Caco-2 (cell line): ENCODE measurements at regions of chr2 and their contacts with region 1.

Region 1: DNA sequence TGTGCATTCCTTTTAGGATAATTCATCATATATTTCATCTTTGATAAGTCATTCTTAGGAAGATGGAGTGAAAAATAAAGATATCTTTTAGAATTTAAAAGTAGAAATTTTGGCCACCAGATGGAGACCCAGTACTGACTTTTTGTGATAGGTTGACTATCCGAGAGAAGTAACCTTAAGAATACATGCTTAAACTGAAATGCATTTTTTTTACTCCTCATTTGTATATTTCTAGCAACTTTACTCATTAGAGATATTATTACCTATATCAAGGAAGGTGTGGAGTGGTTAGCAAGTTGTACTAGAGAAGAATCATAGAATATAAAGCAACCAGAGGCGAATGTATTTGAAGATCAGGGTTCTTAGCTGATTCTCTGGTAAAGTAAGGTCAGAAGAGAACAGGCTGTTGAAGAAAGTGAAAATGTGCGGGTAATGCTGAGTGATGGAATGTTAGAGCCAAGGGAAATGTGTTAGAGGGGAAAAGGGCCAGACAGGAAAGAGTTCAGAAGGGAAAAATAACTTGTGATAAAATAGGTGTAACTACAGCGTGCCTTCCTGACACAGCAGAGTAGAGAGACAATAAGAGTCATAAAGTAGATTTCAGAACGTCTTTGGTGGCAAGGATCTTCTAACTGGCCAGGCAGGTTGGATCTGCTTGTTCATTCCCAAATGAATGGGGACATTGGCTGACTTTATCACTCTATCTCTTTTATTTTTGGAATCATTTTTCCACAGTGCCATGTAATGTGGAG is 52.3 kb downstream of the TDRD15 start:
- DNase-seq: peak in 1 of 2 experiments; percentile 25
- H3K4me3 ChIP-seq: no peak overlapping the region
- H3K4me3 Mint-ChIP-seq: peak overlapping the region; percentile 6
- H3K27ac Mint-ChIP-seq: no peak overlapping the region
- H3K4me1 ChIP-seq: peaks cover 8% of the 10 kb centered on the region
- H3K4me1 Mint-ChIP-seq: peaks cover 15% of the 10 kb centered on the region
- H3K27me3 ChIP-seq: no peaks in the 10 kb centered on the region
- H3K27me3 Mint-ChIP-seq: no peaks in the 10 kb centered on the region
- CTCF ChIP-seq: peak; percentile 12 to 66

Region 2: DNA sequence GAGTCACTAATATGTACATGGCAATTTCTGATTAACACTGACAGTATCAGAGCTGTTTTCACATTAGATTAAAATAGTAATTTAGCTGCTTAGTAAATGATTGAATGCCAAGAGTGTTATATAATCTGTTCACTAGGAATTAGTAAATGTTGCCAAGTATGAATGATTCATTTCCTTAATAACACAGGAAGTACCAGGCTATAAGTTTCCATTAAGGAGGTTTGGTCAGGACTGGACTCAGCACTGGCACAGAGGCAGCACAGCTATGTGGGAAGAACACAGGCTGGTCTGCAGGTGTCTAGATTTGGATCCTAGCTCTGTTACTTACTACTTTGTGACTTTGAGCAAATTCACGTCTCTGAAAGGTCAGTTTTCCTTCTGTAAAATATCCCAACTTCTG is 44.9 kb after region 1 on chr2:
- CTCF ChIA-PET with region 1: interaction called, 4 read pairs
- POLR2A ChIA-PET with region 1: no interaction called
- intact Hi-C with region 1: loop called (anchors 10 kb)
- DNase-seq: no peak
- H3K4me3 ChIP-seq: no peak overlapping the region
- H3K4me3 Mint-ChIP-seq: no peak overlapping the region
- H3K27ac Mint-ChIP-seq: no peak overlapping the region
- H3K4me1 ChIP-seq: peaks cover 10% of the 10 kb centered on the region
- H3K4me1 Mint-ChIP-seq: peaks cover 15% of the 10 kb centered on the region
- H3K27me3 ChIP-seq: no peaks in the 10 kb centered on the region
- H3K27me3 Mint-ChIP-seq: no peaks in the 10 kb centered on the region
- CTCF ChIP-seq: no peak

Region 3: DNA sequence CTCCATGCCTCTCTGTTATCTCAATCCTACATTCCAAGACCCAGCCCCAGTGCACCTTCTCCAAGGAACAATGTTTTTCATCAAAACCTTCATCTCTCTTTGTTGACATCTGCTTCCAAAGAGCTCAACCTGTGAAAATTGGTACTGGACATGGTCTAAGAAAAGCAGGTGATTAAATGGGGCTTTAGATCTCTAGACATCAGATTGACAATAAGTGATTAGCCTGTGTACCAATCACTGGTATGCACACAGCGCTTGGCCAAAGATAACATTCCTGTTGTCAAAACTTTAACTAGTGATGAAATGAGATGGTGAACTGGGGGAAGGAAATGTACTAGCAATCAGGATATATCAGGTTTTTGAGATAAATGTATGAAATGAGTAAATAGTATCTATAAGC is 131.0 kb after region 1 on chr2:
- CTCF ChIA-PET with region 1: no interaction called
- POLR2A ChIA-PET with region 1: no interaction called
- intact Hi-C with region 1: loop called (anchors 2 kb)
- DNase-seq: peak; percentile 64 to 73
- H3K4me3 ChIP-seq: no peak overlapping the region
- H3K4me3 Mint-ChIP-seq: no peak overlapping the region
- H3K27ac Mint-ChIP-seq: no peak overlapping the region
- H3K4me1 ChIP-seq: peaks cover 35% of the 10 kb centered on the region
- H3K4me1 Mint-ChIP-seq: peaks cover under 1% of the 10 kb centered on the region
- H3K27me3 ChIP-seq: no peaks in the 10 kb centered on the region; the same call in 1 of the 2 replicates
- H3K27me3 Mint-ChIP-seq: no peaks in the 10 kb centered on the region
- CTCF ChIP-seq: no peak

Region 4: GRCh38 chr2:21372654-21373053 is 196.6 kb after region 1 on chr2:
- CTCF ChIA-PET with region 1: no interaction called
- POLR2A ChIA-PET with region 1: no interaction called
- intact Hi-C with region 1: loop called (anchors 5 kb)
- DNase-seq: peak in 1 of 2 experiments; percentile 46
- H3K4me3 ChIP-seq: no peak overlapping the region
- H3K4me3 Mint-ChIP-seq: no peak overlapping the region
- H3K27ac Mint-ChIP-seq: no peak overlapping the region
- H3K4me1 ChIP-seq: no peaks in the 10 kb centered on the region
- H3K4me1 Mint-ChIP-seq: no peaks in the 10 kb centered on the region
- H3K27me3 ChIP-seq: no peaks in the 10 kb centered on the region; the same call in 1 of the 2 replicates
- H3K27me3 Mint-ChIP-seq: peaks cover 3% of the 10 kb centered on the region
- CTCF ChIP-seq: peak; percentile 38 to 54

Region 5: GRCh38 chr2:21627938-21628337 is 451.9 kb after region 1 on chr2:
- CTCF ChIA-PET with region 1: no interaction called
- POLR2A ChIA-PET with region 1: no interaction called
- intact Hi-C with region 1: loop called (anchors 10 kb)
- DNase-seq: no peak
- H3K4me3 ChIP-seq: no peak overlapping the region
- H3K4me3 Mint-ChIP-seq: no peak overlapping the region
- H3K27ac Mint-ChIP-seq: no peak overlapping the region
- H3K4me1 ChIP-seq: no peaks in the 10 kb centered on the region; the same call in 1 of the 2 replicates
- H3K4me1 Mint-ChIP-seq: no peaks in the 10 kb centered on the region
- H3K27me3 ChIP-seq: no peaks in the 10 kb centered on the region
- H3K27me3 Mint-ChIP-seq: peaks cover 4% of the 10 kb centered on the region
- CTCF ChIP-seq: no peak

Region 6: DNA sequence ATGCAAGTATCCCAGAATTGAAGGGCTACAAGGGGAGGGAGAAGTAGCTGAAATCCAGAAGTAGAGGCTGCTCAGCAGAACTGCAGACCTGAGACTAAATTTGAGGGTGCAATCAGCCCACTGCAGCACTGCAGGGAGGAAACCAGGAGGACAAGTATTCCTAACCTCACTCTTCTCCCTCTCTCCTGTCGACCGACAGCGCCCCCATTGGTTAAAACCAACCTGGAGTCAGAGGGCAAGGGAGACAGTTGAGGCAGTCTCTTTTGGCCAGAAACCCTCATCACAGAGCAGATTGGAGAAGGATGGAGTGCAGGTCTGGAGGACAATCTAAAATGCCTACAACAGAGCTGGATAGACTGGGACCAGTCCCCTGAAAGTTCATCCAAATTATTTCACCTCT is 1440.0 kb after region 1 on chr2:
- CTCF ChIA-PET with region 1: no interaction called
- POLR2A ChIA-PET with region 1: no interaction called
- intact Hi-C with region 1: no loop called
- DNase-seq: no peak
- H3K4me3 ChIP-seq: no peak overlapping the region
- H3K4me3 Mint-ChIP-seq: no peak overlapping the region
- H3K27ac Mint-ChIP-seq: no peak overlapping the region
- H3K4me1 ChIP-seq: no peaks in the 10 kb centered on the region
- H3K4me1 Mint-ChIP-seq: no peaks in the 10 kb centered on the region
- H3K27me3 ChIP-seq: no peaks in the 10 kb centered on the region
- H3K27me3 Mint-ChIP-seq: peaks cover 15% of the 10 kb centered on the region
- CTCF ChIP-seq: no peak